ENCODE measurements at regions of chr2 and their contacts with region 1.

Region 1: GRCh38 chr2:32772638-32773447 is 145.0 kb downstream of the TTC27 start:
- DNase-seq: peak; percentile 6
- H3K4me3 Mint-ChIP-seq: no peak overlapping the region
- H3K27ac Mint-ChIP-seq: no peak overlapping the region
- H3K4me1 Mint-ChIP-seq: no peaks in the 10 kb centered on the region
- H3K27me3 Mint-ChIP-seq: no peaks in the 10 kb centered on the region
- CTCF ChIP-seq: peak; percentile 74

Region 2: DNA sequence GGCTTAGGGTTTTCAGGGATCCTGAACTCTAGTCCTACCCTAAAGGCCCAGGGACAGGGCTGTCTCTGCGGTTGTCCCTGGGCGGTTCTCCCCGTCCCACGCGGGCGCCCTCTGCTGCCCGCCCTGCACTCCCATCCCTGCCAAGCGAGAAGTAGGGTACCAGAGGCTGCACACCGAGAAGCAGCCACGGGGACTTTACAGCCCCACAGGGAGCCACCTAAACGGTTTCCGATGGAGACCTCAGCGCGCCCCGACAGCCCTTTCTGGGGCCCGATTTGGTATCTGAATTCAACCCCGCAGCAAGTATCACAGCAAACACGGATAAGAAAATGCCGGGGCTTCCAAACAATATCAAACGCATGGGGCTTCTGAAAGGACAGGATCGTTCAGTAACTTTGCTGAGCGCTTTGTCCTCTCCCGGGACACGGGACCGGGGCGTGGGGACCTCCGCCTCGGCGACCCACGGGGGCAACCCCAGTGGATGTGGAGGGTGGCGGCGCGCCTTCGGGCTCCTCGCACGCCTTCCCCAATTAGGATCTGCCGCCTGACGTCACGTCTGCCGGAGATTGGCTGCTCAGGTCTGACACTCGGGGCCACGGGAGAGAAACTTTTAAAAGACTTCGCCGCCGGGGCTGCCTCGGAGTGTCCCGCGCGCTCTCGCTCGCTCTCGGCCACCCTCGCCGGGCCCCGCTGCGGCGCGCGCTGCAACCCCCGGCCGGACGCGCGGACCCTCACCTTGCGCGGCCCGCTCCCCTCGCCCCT is 173.7 kb after region 1 on chr2 and contains the start of gene LTBP1:
- CTCF ChIA-PET with region 1: no interaction called
- intact Hi-C with region 1: loop called (anchors 1 kb)
- DNase-seq: peak; percentile 81
- H3K4me3 Mint-ChIP-seq: peak within 1 kb of the TSS; percentile 75
- H3K27ac Mint-ChIP-seq: no peak within 1 kb of the TSS
- H3K4me1 Mint-ChIP-seq: peaks cover 22% of the 10 kb centered on the region
- H3K27me3 Mint-ChIP-seq: no peaks in the 10 kb centered on the region
- CTCF ChIP-seq: peak; percentile 68
- total RNA-seq, gene LTBP1: 12.8 and 13.9 TPM in 2 replicates

Region 3: GRCh38 chr2:33275689-33276444 is 503.0 kb after region 1 on chr2:
- CTCF ChIA-PET with region 1: no interaction called
- intact Hi-C with region 1: loop called (anchors 5 kb)
- DNase-seq: peak; percentile 89
- H3K4me3 Mint-ChIP-seq: peak overlapping the region; percentile 31
- H3K27ac Mint-ChIP-seq: peak overlapping the region; percentile 98
- H3K4me1 Mint-ChIP-seq: peaks cover 40% of the 10 kb centered on the region
- H3K27me3 Mint-ChIP-seq: no peaks in the 10 kb centered on the region
- CTCF ChIP-seq: no peak

Region 4: DNA sequence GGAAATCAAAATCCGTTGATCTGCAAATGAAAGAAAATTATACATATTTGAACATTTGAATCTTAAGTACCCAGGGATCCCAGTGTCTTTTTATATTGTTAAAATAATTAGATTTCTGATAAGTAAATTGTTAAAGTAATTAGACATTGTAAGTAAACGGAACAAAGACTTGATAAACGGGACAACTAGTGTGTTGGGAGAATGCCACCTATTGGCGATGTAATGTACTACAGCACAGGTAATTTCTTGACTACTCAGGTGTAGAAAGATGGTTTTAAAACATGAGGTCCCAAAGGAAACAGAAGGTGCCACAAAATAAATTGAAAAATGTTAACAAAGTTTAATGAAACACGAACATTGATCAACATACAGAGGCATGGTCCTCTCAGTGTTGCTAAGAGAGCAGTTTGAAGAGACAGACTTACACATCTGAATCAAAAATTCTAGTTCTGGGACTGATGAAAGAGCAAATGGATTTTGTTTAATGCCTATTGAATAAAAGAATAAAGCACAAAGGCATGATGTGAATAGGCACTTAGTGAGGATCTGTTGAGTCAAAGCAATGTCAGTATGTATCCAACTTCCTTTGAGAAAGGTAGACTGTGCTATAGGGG is 600.2 kb after region 1 on chr2:
- CTCF ChIA-PET with region 1: no interaction called
- intact Hi-C with region 1: loop called (anchors 2 kb)
- DNase-seq: peak; percentile 49
- H3K4me3 Mint-ChIP-seq: no peak overlapping the region
- H3K27ac Mint-ChIP-seq: no peak overlapping the region
- H3K4me1 Mint-ChIP-seq: no peaks in the 10 kb centered on the region
- H3K27me3 Mint-ChIP-seq: no peaks in the 10 kb centered on the region
- CTCF ChIP-seq: peak; percentile 61

Region 5: DNA sequence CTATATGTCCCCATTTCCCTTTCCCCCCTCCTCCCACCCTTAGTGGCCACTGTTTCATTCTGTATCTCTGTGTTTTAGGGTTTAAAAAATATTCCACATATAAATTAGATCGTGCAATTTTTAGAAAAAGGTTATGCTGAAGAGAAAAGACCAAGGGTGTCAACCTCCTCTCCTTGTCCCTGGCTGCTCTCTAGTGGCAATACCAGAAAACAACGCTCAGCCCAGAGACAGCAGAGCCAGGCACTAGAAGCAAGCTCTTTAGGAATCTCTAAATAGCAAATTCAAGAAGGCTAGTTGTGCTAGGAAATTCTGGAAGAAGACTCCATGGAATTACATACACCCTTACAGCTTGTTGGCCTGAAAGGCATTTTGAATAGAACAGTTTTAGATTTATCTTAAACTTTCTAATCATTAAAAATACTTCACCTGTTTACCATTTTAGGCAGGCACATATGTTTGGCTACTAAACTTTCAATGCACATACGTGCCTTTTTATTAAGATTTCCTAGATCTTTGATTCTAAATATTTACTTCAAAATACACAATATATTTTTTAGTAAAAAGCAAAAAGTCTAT is 668.5 kb after region 1 on chr2:
- CTCF ChIA-PET with region 1: interaction called, 3 read pairs
- intact Hi-C with region 1: loop called (anchors 1 kb)
- DNase-seq: peak; percentile 49
- H3K4me3 Mint-ChIP-seq: no peak overlapping the region
- H3K27ac Mint-ChIP-seq: no peak overlapping the region
- H3K4me1 Mint-ChIP-seq: no peaks in the 10 kb centered on the region
- H3K27me3 Mint-ChIP-seq: no peaks in the 10 kb centered on the region
- CTCF ChIP-seq: peak; percentile 44

Measured in Calu3 (cell line).